T-cell (primary cell): ENCODE measurements at regions of chr9 and their contacts with region 1.

Region 1: DNA sequence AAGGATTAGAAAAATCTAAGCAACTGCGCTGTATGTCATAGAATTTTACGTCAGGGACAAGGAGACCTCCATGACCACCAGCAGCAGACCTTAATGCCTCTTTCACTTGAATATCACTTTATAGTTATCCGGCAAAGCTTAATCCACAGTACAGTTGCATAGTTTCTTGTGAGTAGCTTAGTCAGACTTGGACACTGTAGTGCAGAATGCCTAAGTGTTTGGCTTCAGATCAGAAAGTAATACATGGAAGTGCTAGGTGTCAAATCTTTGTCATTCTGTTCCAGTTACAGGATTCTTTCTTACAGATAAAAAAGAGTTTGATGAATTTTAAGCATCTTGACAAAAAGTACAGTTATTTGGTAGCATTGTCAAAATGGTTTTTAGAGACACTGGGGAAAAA is 239.9 kb upstream of the PAPPA start:
- DNase-seq: no peak
- ATAC-seq: no peak
- H3K4me3 ChIP-seq: no peak overlapping the region
- H3K4me3 Mint-ChIP-seq: no peak overlapping the region
- H3K27ac ChIP-seq: no peak overlapping the region
- H3K27ac Mint-ChIP-seq: no peak overlapping the region
- H3K4me1 ChIP-seq: no peaks in the 10 kb centered on the region
- H3K4me1 Mint-ChIP-seq: no peaks in the 10 kb centered on the region
- H3K27me3 ChIP-seq: no peaks in the 10 kb centered on the region
- H3K27me3 Mint-ChIP-seq: no peaks in the 10 kb centered on the region

Region 2: DNA sequence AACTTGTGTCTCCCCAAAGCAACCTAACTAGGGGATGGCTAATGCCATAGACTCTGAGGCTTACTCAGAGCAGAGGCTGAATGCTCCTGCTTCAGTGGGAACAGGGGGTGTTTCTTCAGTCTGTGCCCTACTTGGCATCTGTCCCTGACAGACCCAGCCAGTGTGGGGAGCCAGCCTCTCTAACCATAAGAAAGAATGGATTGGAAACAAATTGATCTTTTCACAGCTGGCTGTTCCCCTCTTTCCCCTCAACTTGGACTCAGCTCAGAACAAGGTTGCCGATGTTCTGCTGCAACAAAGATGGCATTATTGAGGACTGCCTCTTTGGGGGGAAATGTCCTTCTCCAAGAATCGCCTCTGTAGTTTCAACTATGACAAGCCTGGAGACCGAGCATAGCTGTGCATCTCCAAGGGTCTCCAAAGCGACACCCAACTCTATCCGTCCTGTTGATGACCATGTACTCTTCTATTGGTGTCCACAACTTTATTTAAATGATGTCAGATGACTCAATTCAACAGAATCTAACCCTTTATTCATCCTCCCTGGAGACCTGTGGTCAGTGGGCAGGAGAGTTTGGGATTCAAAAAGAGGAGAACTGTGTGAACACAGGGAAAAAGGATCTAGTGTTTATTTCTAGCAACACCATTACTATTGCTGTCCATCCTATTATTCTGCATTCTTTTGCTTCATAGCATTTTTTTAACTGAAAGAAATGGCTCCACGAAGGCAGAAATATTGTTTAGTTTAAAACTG is 771.0 kb before region 1 on chr9:
- CTCF ChIA-PET with region 1: no interaction called
- POLR2A ChIA-PET with region 1: interaction called in 1 of 2 experiments, 11 read pairs
- DNase-seq: no peak
- ATAC-seq: no peak
- H3K4me3 ChIP-seq: no peak overlapping the region
- H3K4me3 Mint-ChIP-seq: no peak overlapping the region
- H3K27ac ChIP-seq: no peak overlapping the region
- H3K27ac Mint-ChIP-seq: no peak overlapping the region
- H3K4me1 ChIP-seq: no peaks in the 10 kb centered on the region
- H3K4me1 Mint-ChIP-seq: peaks cover 0 to 16% (median 0%) of the 10 kb centered on the region in 3 donors
- H3K27me3 ChIP-seq: peaks cover 0 to 6% of the 10 kb centered on the region in 2 experiments
- H3K27me3 Mint-ChIP-seq: peaks cover 14 to 25% of the 10 kb centered on the region in 2 donors

Region 3: DNA sequence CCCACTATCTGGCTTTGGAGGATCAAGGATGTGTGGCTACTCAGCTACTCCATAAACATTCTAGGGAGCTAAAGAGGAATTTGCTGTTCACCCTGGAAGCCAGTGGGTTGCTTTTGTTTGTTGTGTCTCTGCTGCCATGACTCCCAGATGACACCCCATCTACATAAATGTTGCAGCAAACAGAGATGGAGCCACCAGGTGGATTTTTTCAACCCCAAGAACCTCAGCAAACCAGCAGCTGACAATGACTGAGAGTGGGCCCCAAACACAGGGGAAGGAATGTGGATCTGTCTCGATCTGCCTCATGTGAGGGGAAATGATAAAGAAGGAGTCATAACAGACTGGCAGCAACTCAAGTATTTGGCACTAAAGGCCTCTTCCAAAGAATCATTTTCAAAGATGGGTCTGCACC is 663.1 kb before region 1 on chr9:
- CTCF ChIA-PET with region 1: no interaction called
- POLR2A ChIA-PET with region 1: no interaction called
- DNase-seq: no peak
- ATAC-seq: no peak
- H3K4me3 ChIP-seq: no peak overlapping the region
- H3K4me3 Mint-ChIP-seq: no peak overlapping the region
- H3K27ac ChIP-seq: no peak overlapping the region
- H3K27ac Mint-ChIP-seq: no peak overlapping the region
- H3K4me1 ChIP-seq: no peaks in the 10 kb centered on the region
- H3K4me1 Mint-ChIP-seq: no peaks in the 10 kb centered on the region
- H3K27me3 ChIP-seq: no peaks in the 10 kb centered on the region
- H3K27me3 Mint-ChIP-seq: peaks cover 18 to 29% of the 10 kb centered on the region in 2 donors

Region 4: DNA sequence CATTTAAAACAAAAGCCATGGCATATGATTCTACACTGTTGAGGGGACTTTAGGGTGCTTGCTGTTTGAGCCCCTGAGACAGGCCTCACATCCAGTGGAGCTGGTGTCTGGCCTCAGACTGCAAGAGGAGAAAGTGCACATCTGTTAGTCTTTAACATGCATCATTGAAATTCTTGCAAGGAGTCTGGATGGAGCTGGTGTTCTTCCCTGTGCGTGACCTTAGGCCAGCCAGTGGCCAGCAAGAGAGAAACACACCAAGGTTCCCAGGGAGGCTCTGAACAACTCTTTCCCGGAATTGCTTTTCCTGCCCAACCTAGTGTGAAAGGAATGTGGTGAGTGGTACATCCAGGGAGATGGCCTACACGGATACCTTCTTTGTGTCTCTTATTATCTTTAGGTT is 512.9 kb before region 1 on chr9:
- CTCF ChIA-PET with region 1: no interaction called
- POLR2A ChIA-PET with region 1: no interaction called
- DNase-seq: no peak
- ATAC-seq: no peak
- H3K4me3 ChIP-seq: no peak overlapping the region
- H3K4me3 Mint-ChIP-seq: no peak overlapping the region
- H3K27ac ChIP-seq: no peak overlapping the region
- H3K27ac Mint-ChIP-seq: no peak overlapping the region
- H3K4me1 ChIP-seq: no peaks in the 10 kb centered on the region
- H3K4me1 Mint-ChIP-seq: no peaks in the 10 kb centered on the region
- H3K27me3 ChIP-seq: no peaks in the 10 kb centered on the region
- H3K27me3 Mint-ChIP-seq: peaks cover 0 to 15% of the 10 kb centered on the region in 2 donors

Region 5: DNA sequence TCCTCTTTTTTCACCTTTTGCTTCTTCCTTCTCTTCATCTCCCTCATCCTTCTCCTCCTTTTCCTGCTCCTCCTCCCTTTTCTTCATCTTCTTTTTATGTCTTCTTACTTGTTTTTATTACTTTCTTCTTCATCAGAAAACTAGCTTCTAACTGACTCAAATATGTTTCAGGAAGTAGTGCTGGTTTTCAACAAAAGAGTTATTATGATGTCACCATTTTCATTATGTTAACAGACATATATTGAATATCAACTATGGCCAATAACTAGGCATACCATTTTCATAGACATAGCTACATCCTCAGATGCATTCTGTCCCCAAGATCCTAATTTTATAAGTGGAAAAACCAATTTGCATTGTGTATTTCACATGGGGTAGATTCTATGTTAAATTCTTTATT is 13.0 kb before region 1 on chr9:
- CTCF ChIA-PET with region 1: no interaction called
- POLR2A ChIA-PET with region 1: no interaction called
- DNase-seq: no peak
- ATAC-seq: no peak
- H3K4me3 ChIP-seq: no peak overlapping the region
- H3K4me3 Mint-ChIP-seq: no peak overlapping the region
- H3K27ac ChIP-seq: no peak overlapping the region
- H3K27ac Mint-ChIP-seq: no peak overlapping the region
- H3K4me1 ChIP-seq: no peaks in the 10 kb centered on the region
- H3K4me1 Mint-ChIP-seq: no peaks in the 10 kb centered on the region
- H3K27me3 ChIP-seq: no peaks in the 10 kb centered on the region
- H3K27me3 Mint-ChIP-seq: no peaks in the 10 kb centered on the region